ENCODE measurements at regions of chr4 and their contacts with region 1.

Region 1: GRCh38 chr4:65416891-65417290 is 253.4 kb downstream of the EPHA5 start:
- DNase-seq: peak; percentile 82
- ATAC-seq: peak; percentile 97
- H3K4me3 ChIP-seq: peak overlapping the region; percentile 11; the same call in 1 of the 2 replicates
- H3K27ac ChIP-seq: peak overlapping the region; percentile 8; the same call in 1 of the 2 replicates
- H3K4me1 ChIP-seq: peaks cover 21% of the 10 kb centered on the region
- H3K27me3 ChIP-seq: no peaks in the 10 kb centered on the region
- CTCF ChIP-seq: no peak

Region 2: DNA sequence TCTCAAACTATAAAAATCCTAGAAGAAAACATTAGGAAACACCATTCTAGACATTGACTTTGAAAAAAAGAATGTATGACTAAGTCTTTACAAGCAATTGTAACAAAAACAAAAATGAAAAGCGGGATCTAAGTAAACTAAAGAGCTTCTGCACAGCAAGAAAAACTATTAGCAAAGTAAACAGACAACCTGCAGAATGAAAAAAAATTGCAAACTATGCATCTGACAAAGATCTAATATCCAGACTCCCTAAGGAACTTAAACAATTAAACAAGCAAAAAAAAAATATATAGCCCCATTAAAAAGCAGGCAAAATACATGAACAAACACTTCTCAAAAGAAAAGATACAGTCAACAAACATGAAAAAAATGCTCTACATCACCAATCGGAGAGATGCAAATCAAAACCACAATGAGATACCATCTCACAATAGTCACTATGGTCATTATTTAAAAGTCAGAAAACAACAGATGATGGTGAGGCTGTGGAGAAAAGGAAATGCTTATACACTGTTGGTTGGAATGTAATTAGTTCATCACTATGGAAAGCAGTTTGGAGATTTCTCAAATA is 85.3 kb after region 1 on chr4:
- CTCF ChIA-PET with region 1: no interaction called
- POLR2A ChIA-PET with region 1: no interaction called
- intact Hi-C with region 1: loop called (anchors 5 kb)
- DNase-seq: peak; percentile 97
- ATAC-seq: peak; percentile 85
- H3K4me3 ChIP-seq: peak overlapping the region; percentile 50
- H3K27ac ChIP-seq: peak overlapping the region; percentile 66
- H3K4me1 ChIP-seq: peaks cover 50% of the 10 kb centered on the region
- H3K27me3 ChIP-seq: no peaks in the 10 kb centered on the region
- CTCF ChIP-seq: no peak

Region 3: GRCh38 chr4:65645185-65645584 is 228.3 kb after region 1 on chr4:
- CTCF ChIA-PET with region 1: no interaction called
- POLR2A ChIA-PET with region 1: no interaction called
- intact Hi-C with region 1: no loop called
- DNase-seq: no peak
- ATAC-seq: no peak
- H3K4me3 ChIP-seq: no peak overlapping the region
- H3K27ac ChIP-seq: no peak overlapping the region
- H3K4me1 ChIP-seq: peaks cover 10% of the 10 kb centered on the region
- H3K27me3 ChIP-seq: no peaks in the 10 kb centered on the region
- CTCF ChIP-seq: no peak

Region 4: DNA sequence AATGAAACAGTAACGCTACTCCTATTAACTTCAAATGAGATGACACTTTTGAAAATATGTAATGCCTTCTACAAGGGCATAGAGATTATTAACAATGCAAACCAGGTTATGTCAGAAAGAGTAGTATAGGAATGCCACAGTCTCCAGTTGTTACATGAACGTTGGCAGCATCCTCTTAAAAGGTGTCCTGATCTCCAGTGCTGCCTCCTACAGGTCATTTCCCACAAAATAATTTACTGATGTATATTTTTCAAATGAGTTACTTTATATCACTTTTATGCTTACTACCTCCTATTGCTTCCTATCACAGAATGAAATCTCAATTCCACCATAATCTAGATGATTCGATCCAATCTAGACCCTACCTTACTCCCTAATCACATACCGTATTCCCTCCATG is 448.6 kb after region 1 on chr4:
- CTCF ChIA-PET with region 1: no interaction called
- POLR2A ChIA-PET with region 1: no interaction called
- intact Hi-C with region 1: loop called (anchors 5 kb)
- DNase-seq: peak; percentile 77
- ATAC-seq: no peak
- H3K4me3 ChIP-seq: no peak overlapping the region
- H3K27ac ChIP-seq: no peak overlapping the region
- H3K4me1 ChIP-seq: peaks cover 17% of the 10 kb centered on the region
- H3K27me3 ChIP-seq: no peaks in the 10 kb centered on the region
- CTCF ChIP-seq: peak; percentile 89

Region 5: DNA sequence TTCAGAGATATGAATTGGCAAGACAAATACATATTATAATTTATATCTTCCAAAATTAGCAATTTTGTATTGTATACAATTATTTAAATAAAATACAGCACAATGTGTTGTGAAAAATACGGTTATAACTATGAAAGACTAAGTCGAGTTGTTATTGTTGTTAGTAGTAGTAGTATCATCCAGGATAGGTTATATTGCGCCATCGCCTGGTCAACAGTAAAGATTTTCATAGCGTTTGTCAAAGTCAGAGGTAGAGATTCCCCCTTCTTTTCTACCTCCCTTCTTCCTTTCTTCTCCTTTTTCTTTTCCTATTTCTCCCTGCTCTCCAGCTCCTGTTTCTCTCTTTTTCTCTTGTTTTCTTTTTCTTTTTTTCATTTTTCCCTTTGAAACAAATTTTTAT is 752.5 kb after region 1 on chr4:
- CTCF ChIA-PET with region 1: no interaction called
- POLR2A ChIA-PET with region 1: no interaction called
- intact Hi-C with region 1: loop called (anchors 2 kb)
- DNase-seq: peak; percentile 74
- ATAC-seq: peak; percentile 71
- H3K4me3 ChIP-seq: no peak overlapping the region
- H3K27ac ChIP-seq: no peak overlapping the region
- H3K4me1 ChIP-seq: no peaks in the 10 kb centered on the region
- H3K27me3 ChIP-seq: no peaks in the 10 kb centered on the region
- CTCF ChIP-seq: peak; percentile 88